GM12878 (cell line): ENCODE measurements at regions of chr10 and their contacts with region 1.

Region 1: DNA sequence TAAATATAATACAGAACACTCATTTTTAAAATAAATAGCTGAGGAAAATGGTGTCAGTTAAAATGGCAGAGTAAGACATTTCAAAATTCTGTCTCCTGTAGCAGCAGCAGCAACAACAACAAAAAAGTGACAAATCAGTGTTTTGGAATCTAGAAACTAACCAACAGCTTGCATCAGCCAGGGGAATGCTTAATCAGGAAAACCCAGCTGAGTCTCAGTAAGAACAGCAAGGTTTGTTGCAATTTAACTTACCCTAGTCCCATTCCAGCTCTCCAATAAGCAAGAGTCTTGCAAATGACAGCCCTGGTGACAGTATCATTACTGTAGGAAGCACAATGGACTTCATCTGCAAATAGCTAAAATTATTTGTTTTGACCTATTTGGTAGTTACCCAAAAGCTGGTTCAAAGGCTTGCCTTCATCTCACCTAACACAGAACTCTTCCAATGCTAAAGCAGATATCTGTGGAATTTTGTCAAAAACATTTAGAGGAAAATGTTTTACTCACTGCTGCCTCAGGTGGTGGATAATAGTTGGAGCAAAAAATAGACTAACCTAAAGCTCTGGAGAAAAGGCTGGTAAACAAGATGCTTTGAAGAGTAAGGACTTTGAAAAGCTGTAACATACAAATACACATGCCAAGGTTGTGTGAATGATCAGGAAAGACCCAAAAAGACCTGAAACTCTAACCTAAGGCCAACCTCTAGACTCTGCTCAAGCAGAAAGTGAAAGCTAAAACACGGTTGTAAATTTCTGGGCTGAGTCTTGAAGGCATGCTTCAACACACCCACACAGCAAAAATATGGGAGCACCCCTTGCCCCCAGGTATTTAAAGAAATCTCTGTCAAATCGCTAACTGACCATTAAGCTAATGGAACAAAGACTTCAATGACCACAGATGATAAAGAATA is 9.9 kb upstream of the ARHGAP22 start:
- DNase-seq: peak; percentile 72
- ATAC-seq: peak; percentile 81
- H3K4me3 ChIP-seq: peak overlapping the region; percentile 19; the same call in 1 of the 2 replicates
- H3K27ac ChIP-seq: peak overlapping the region; percentile 56; the same call in 1 of the 2 replicates
- H3K4me1 ChIP-seq: peaks cover 15% of the 10 kb centered on the region
- H3K27me3 ChIP-seq: no peaks in the 10 kb centered on the region
- CTCF ChIP-seq: peak; percentile 18 to 54 (median 40); a peak in 4 of 6 replicates
- EP300 ChIP-seq: no peak
- POLR2A ChIP-seq: no peak
- RAD21 ChIP-seq: no peak

Region 2: GRCh38 chr10:48527756-48528155 is 87.0 kb before region 1 on chr10:
- CTCF ChIA-PET with region 1: no interaction called
- POLR2A ChIA-PET with region 1: no interaction called
- RAD21 ChIA-PET with region 1: no interaction called
- SMC1A ChIA-PET with region 1: no interaction called
- in situ Hi-C with region 1: no loop called
- intact Hi-C with region 1: no loop called
- DNase-seq: no peak
- ATAC-seq: no peak
- H3K4me3 ChIP-seq: no peak overlapping the region
- H3K27ac ChIP-seq: no peak overlapping the region
- H3K4me1 ChIP-seq: no peaks in the 10 kb centered on the region
- H3K27me3 ChIP-seq: peaks cover 0 to 9% of the 10 kb centered on the region in 2 experiments; a peak in 2 of 4 replicates
- CTCF ChIP-seq: no peak
- EP300 ChIP-seq: no peak
- POLR2A ChIP-seq: no peak
- RAD21 ChIP-seq: no peak

Region 3: DNA sequence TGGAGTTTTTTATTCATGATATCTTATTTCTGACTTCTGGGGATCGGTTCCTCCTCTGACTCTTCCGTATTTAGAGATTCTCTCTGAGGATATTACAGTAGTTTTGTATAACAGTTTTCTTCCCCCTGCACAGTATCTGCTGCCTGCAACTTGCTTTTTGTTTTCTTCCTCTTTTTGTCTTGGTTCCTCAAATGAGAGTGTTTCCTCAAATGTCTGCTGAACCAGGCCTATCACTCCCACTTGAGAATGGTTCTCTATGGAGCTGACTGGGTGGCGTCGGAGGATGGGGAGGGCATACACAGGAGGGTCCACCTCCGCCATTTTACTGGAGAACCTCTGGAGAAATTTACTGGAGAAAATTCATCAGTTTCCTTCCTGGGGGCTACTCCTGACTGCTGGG is 37.6 kb before region 1 on chr10:
- CTCF ChIA-PET with region 1: interaction called, 11 read pairs
- POLR2A ChIA-PET with region 1: interaction called, 7 read pairs
- RAD21 ChIA-PET with region 1: interaction called, 9 read pairs
- SMC1A ChIA-PET with region 1: interaction called, 6 read pairs
- in situ Hi-C with region 1: no loop called
- intact Hi-C with region 1: no loop called
- DNase-seq: no peak
- ATAC-seq: peak; percentile 68
- H3K4me3 ChIP-seq: no peak overlapping the region
- H3K27ac ChIP-seq: peak overlapping the region; percentile 43; the same call in 1 of the 2 replicates
- H3K4me1 ChIP-seq: peaks cover 34% of the 10 kb centered on the region
- H3K27me3 ChIP-seq: no peaks in the 10 kb centered on the region
- CTCF ChIP-seq: no peak
- EP300 ChIP-seq: no peak
- POLR2A ChIP-seq: no peak
- RAD21 ChIP-seq: no peak

Region 4: DNA sequence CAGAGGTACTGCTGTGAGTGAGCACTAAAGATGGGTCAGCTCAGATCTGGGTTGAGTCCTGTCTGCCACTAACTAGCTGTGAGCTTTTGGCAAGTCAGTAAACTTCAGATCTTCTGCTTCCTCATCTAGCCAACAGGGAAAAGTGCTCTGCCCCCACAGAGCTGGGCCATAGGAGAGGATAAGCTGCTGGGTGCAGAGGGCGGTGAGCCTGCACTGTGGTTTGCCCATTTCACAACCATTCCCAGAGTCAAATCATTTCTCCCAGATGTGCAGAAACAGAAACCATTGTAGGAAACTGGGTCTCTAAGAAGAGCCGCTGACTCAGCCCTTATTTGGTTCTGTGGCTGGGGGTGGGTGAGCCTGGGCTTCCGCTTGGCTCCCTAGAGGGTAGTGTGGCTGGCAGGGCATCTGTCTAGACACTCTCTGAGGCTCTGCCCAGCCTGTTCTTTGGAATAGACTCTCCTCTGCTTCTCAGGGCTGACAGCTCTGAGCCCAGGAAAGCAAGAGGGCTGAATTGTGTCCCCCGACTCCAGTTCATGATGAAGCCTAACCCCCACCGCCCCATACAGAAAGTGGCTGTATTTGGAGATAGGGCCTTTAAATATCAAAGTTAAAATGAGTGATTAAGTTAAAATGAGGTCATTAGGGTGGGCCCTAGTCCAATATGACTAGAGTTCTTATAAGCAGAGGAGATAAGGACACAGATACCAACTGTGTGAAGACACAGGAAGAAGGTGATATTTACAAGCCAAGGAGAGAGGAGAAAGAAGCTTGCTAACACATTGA is 19.7 kb after region 1 on chr10:
- CTCF ChIA-PET with region 1: interaction called, 175 read pairs
- POLR2A ChIA-PET with region 1: interaction called, 16 read pairs
- RAD21 ChIA-PET with region 1: interaction called, 28 read pairs
- SMC1A ChIA-PET with region 1: interaction called, 174 read pairs
- in situ Hi-C with region 1: no loop called
- intact Hi-C with region 1: no loop called
- DNase-seq: peak; percentile 91
- ATAC-seq: peak; percentile 97
- H3K4me3 ChIP-seq: no peak overlapping the region
- H3K27ac ChIP-seq: peak overlapping the region; percentile 45
- H3K4me1 ChIP-seq: peaks cover 38% of the 10 kb centered on the region
- H3K27me3 ChIP-seq: no peaks in the 10 kb centered on the region
- CTCF ChIP-seq: no peak
- EP300 ChIP-seq: peak; percentile 35 to 41; a peak in 1 of 4 replicates
- POLR2A ChIP-seq: no peak
- RAD21 ChIP-seq: no peak

Region 5: DNA sequence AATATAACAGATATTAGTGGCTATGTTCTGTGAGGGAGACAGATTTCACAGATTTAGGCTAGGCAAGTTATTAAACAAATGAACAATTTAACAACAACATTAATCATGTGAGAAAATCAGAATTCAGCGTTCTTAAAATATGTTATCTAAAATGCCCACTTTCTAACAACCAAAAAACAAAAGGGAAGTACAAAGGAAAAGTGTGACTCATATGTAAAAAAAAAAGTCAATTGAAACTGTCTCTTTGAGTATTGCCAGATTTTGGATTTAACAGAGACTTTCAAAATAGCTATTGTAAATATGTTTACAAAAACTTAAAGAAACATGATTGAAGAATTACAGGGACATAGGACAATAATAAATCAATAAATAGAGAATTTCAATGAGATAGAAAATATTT is 24.9 kb after region 1 on chr10:
- CTCF ChIA-PET with region 1: interaction called, 175 read pairs
- POLR2A ChIA-PET with region 1: interaction called, 16 read pairs
- RAD21 ChIA-PET with region 1: interaction called, 28 read pairs
- SMC1A ChIA-PET with region 1: interaction called, 174 read pairs
- in situ Hi-C with region 1: no loop called
- intact Hi-C with region 1: no loop called
- DNase-seq: no peak
- ATAC-seq: peak; percentile 30
- H3K4me3 ChIP-seq: peak overlapping the region; percentile 10; the same call in 1 of the 2 replicates
- H3K27ac ChIP-seq: peak overlapping the region; percentile 53; the same call in 1 of the 2 replicates
- H3K4me1 ChIP-seq: peaks cover 19% of the 10 kb centered on the region
- H3K27me3 ChIP-seq: no peaks in the 10 kb centered on the region
- CTCF ChIP-seq: no peak
- EP300 ChIP-seq: no peak
- POLR2A ChIP-seq: no peak
- RAD21 ChIP-seq: no peak

Region 6: DNA sequence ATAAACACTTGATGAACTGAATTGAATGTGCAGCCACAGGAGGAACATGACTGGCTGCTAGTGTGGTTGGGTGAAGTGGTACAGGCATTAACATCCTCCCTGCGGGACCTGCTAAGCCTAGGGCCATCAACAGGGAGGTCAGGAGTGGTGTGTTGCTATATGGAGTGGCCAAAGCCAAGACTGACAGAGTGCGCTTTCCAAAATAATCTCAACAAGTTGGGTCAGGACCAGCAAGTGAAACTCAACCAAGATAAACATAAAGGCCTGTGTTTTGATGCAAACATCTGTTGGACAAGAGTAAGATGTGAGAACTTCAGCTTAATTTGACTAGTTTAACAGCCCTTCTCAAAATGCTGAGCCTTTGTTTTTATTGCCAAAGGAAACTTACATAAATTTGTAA is 167.7 kb after region 1 on chr10:
- CTCF ChIA-PET with region 1: no interaction called
- POLR2A ChIA-PET with region 1: no interaction called
- RAD21 ChIA-PET with region 1: no interaction called
- SMC1A ChIA-PET with region 1: no interaction called
- in situ Hi-C with region 1: no loop called
- intact Hi-C with region 1: no loop called
- DNase-seq: no peak
- ATAC-seq: no peak
- H3K4me3 ChIP-seq: no peak overlapping the region
- H3K27ac ChIP-seq: no peak overlapping the region
- H3K4me1 ChIP-seq: no peaks in the 10 kb centered on the region
- H3K27me3 ChIP-seq: no peaks in the 10 kb centered on the region
- CTCF ChIP-seq: no peak
- EP300 ChIP-seq: no peak
- POLR2A ChIP-seq: no peak
- RAD21 ChIP-seq: no peak